ENCODE measurements at regions of chr22 and their contacts with region 1.

Region 1: GRCh38 chr22:19679522-19680101 is 34.7 kb upstream of the SEPTIN5 start:
- DNase-seq: no peak
- H3K4me3 ChIP-seq: no peak overlapping the region
- H3K27me3 ChIP-seq: no peaks in the 10 kb centered on the region
- CTCF ChIP-seq: peak; percentile 90

Region 2: DNA sequence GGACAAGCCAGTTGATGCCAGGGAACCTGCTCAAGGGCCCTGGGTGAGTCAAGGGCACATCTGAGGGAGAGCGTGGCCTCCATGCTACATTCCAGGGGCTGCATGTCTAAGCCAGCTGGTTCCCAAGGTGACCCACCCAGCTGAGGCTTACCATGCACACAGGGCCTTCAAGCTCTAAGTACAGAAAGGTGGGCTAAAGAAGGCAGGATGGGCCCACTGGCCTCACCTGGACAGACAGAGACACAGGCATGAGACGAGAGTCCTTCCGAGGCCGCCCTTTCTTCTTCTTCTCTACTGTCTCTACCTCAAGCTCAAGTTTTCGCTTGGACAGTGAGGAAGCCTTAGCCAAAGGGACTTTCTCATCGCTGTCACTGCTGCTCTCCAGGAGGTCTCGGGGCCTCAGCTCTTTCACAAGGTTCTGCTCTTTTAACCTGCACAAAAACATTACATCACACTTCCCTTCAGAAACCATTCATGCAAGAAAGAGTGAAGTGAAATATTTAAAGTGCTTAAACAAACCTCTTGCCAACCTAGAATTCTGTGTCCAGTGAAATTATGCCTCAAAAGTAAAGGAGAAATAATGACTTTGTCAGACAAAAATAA is 318.0 kb before region 1 on chr22:
- CTCF ChIA-PET with region 1: no interaction called
- POLR2A ChIA-PET with region 1: no interaction called
- DNase-seq: no peak
- H3K4me3 ChIP-seq: no peak overlapping the region
- H3K27me3 ChIP-seq: no peaks in the 10 kb centered on the region
- CTCF ChIP-seq: no peak

Region 3: DNA sequence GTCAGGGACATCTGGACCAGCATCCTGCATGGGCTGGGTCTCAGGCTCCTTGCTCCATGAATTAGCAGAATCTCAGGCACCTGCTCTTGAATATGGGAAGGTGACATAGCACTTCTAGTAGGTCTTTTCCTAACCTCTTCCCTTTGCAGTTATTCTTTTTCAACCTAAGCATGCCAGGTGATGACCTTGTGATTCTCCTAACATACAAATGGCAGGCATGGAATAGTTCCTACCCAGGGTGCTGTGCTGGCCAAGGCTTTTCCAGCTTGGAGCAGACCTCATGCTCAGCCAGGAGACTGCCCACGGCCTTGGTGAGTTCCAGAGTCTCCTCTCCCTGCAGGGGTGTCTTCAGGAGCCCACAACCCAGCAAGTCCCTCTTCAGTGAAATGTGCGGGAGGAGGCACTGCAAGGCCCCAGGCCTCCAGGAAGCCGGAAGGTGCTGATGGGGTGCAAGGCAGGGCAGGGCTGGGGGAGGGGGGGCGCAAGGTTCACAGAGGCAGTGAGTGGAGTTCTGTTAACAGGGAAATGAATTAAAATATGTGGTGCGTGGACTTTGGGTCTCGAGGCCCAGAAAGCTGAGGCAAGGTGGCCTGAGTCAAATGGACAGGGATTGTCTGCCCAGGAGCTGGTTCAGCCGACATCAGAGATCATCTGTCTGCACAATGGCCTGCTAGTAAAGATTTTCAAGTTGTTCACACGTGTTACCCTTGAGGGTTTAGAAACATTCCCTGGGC is 41.2 kb before region 1 on chr22:
- CTCF ChIA-PET with region 1: no interaction called
- POLR2A ChIA-PET with region 1: no interaction called
- DNase-seq: no peak
- H3K4me3 ChIP-seq: no peak overlapping the region
- H3K27me3 ChIP-seq: peaks cover 12% of the 10 kb centered on the region; the same call in 1 of the 2 replicates
- CTCF ChIP-seq: no peak

Region 4: GRCh38 chr22:19663286-19663815 is 16.3 kb before region 1 on chr22:
- CTCF ChIA-PET with region 1: interaction called, 62 read pairs
- POLR2A ChIA-PET with region 1: no interaction called
- DNase-seq: no peak
- H3K4me3 ChIP-seq: no peak overlapping the region
- H3K27me3 ChIP-seq: peaks cover 2% of the 10 kb centered on the region
- CTCF ChIP-seq: no peak

Region 5: GRCh38 chr22:19691721-19692341 is 12.2 kb after region 1 on chr22:
- CTCF ChIA-PET with region 1: interaction called, 31 read pairs
- POLR2A ChIA-PET with region 1: no interaction called
- DNase-seq: peak; percentile 22
- H3K4me3 ChIP-seq: no peak overlapping the region
- H3K27me3 ChIP-seq: peaks cover 13% of the 10 kb centered on the region
- CTCF ChIP-seq: no peak

Region 6: GRCh38 chr22:19709063-19709769 is 29.6 kb after region 1 on chr22:
- CTCF ChIA-PET with region 1: interaction called, 15 read pairs
- POLR2A ChIA-PET with region 1: no interaction called
- DNase-seq: no peak
- H3K4me3 ChIP-seq: no peak overlapping the region
- H3K27me3 ChIP-seq: peaks cover 6% of the 10 kb centered on the region; the same call in 1 of the 2 replicates
- CTCF ChIP-seq: no peak

Region 7: DNA sequence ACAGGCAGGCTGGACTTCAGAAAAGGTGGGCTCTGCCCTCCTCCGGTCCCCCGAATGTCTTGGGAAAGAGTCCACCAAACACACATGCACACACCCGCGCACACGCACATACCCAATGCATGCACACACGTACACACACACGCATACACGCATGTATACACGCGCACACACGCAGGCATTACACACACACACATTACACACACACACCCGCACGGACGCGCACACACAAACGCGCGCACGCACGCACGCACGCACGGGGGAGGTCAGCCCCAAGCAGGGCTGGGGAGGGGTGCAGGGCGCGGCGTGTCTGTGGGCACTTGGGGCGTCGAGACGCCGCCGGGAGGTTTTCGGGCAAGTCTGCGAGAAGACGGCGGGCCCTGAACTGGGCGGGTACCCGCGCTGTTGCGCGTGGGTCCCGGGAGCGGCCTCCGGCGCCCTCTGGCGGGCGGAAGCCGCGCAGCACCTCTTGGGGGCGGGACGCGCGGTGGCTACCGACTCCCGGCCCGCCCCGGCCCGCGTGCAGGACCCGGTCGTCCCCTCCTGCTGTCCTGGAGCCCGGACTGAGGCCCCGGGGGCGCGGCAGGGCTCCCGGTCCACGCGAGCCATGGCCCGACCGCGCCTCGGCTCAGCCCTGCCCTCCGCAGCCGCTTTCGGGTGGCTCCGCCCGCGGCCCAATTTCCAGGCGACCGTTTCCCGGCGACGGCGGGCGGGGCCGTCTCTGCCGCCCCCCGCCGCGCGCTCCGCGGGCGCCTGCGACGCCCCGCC is 38.3 kb after region 1 on chr22:
- CTCF ChIA-PET with region 1: interaction called, 13 read pairs
- POLR2A ChIA-PET with region 1: no interaction called
- DNase-seq: peak; percentile 10
- H3K4me3 ChIP-seq: peak overlapping the region; percentile 84
- H3K27me3 ChIP-seq: peaks cover 3% of the 10 kb centered on the region; the same call in 1 of the 2 replicates
- CTCF ChIP-seq: peak; percentile 68

Region 8: DNA sequence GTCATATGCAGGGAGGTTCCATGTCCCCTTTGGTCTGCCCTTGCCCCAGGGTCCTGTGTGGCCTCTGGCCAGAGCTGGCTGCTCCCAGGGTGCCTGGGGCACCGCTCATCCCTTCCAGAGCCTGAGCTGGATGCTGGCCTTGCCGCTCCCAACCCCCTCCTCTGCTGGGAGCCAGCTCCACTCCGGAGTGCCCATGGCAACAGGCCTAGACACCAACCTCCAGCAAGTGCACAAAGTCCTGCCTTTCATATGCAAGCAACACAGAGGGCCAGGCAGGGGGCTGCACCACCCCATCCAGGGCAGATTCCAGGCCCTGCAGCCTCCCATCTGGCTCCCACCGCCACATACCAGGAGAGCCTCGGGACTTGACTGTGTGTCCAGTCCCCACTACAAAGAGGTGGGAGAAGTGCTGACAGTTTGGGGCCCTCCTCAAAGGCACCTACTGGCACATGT is 320.6 kb after region 1 on chr22:
- CTCF ChIA-PET with region 1: no interaction called
- POLR2A ChIA-PET with region 1: no interaction called
- DNase-seq: no peak
- H3K4me3 ChIP-seq: no peak overlapping the region
- H3K27me3 ChIP-seq: no peaks in the 10 kb centered on the region; the same call in 1 of the 2 replicates
- CTCF ChIP-seq: no peak

Measured in BJ (cell line).